Caco-2 (cell line): ENCODE measurements at regions of chr20 and their contacts with region 1.

Region 1: DNA sequence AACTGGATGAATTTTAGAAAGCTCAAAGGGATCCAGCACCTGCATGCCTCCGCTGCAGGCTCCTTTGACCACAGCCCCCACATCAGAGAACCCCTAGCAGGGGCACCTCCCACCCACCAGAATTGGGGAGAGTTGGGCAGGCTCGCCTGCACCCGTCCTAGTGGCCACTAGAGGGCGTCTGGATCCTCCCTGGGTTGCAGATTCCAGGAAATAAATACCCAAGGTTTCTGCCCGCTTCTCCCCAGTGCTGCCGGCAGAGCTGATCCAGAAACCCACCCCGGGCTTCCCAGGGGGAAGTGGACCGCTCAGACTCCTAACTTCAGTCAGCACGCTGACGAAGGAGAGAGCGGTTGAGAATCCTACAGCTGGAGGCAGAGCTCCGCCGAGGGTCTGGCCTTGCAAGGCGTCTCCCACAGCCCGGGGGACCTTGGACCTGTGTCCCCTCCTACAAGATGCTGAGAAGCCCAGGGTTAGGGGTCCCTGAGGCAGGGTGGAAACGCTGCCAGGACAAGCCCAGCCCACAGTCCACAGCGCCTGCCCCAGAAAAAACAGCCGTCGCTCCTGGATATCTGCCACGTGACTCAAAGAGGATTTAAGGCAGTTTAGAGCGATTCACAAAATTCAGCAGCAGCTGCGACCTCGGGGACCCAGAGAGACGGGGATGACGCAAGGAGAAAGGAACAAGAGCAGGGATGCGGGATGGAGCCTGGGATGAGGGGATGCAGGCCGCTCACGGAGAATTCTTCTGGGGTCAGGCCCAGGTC is 32.6 kb upstream of the PHACTR3 start:
- DNase-seq: peak; percentile 82 to 88
- H3K4me3 ChIP-seq: no peak overlapping the region; the same call in 1 of the 2 replicates
- H3K4me3 Mint-ChIP-seq: no peak overlapping the region
- H3K27ac Mint-ChIP-seq: no peak overlapping the region
- H3K4me1 ChIP-seq: no peaks in the 10 kb centered on the region
- H3K4me1 Mint-ChIP-seq: no peaks in the 10 kb centered on the region
- H3K27me3 ChIP-seq: no peaks in the 10 kb centered on the region
- H3K27me3 Mint-ChIP-seq: peaks cover 12% of the 10 kb centered on the region
- CTCF ChIP-seq: peak; percentile 100

Region 2: GRCh38 chr20:59560588-59561227 is 11.0 kb before region 1 on chr20:
- CTCF ChIA-PET with region 1: interaction called, 10 read pairs
- POLR2A ChIA-PET with region 1: no interaction called
- intact Hi-C with region 1: no loop called
- DNase-seq: peak in 1 of 2 experiments; percentile 62
- H3K4me3 ChIP-seq: no peak overlapping the region
- H3K4me3 Mint-ChIP-seq: no peak overlapping the region
- H3K27ac Mint-ChIP-seq: no peak overlapping the region
- H3K4me1 ChIP-seq: no peaks in the 10 kb centered on the region
- H3K4me1 Mint-ChIP-seq: no peaks in the 10 kb centered on the region
- H3K27me3 ChIP-seq: no peaks in the 10 kb centered on the region; the same call in 1 of the 2 replicates
- H3K27me3 Mint-ChIP-seq: peaks cover 19% of the 10 kb centered on the region
- CTCF ChIP-seq: peak; percentile 80 to 96

Region 3: GRCh38 chr20:59605165-59606042 is 33.7 kb after region 1 on chr20:
- CTCF ChIA-PET with region 1: no interaction called
- POLR2A ChIA-PET with region 1: no interaction called
- intact Hi-C with region 1: no loop called
- DNase-seq: no peak
- H3K4me3 ChIP-seq: no peak overlapping the region
- H3K4me3 Mint-ChIP-seq: no peak overlapping the region
- H3K27ac Mint-ChIP-seq: no peak overlapping the region
- H3K4me1 ChIP-seq: no peaks in the 10 kb centered on the region
- H3K4me1 Mint-ChIP-seq: no peaks in the 10 kb centered on the region
- H3K27me3 ChIP-seq: peaks cover 8% of the 10 kb centered on the region
- H3K27me3 Mint-ChIP-seq: peaks cover 49% of the 10 kb centered on the region
- CTCF ChIP-seq: no peak

Region 4: GRCh38 chr20:59751056-59751688 is 179.4 kb after region 1 on chr20:
- CTCF ChIA-PET with region 1: no interaction called
- POLR2A ChIA-PET with region 1: no interaction called
- intact Hi-C with region 1: loop called (anchors 1 kb)
- DNase-seq: peak; percentile 85 to 92
- H3K4me3 ChIP-seq: no peak overlapping the region
- H3K4me3 Mint-ChIP-seq: no peak overlapping the region
- H3K27ac Mint-ChIP-seq: no peak overlapping the region
- H3K4me1 ChIP-seq: no peaks in the 10 kb centered on the region
- H3K4me1 Mint-ChIP-seq: no peaks in the 10 kb centered on the region
- H3K27me3 ChIP-seq: peaks cover 10% of the 10 kb centered on the region
- H3K27me3 Mint-ChIP-seq: peaks cover 70% of the 10 kb centered on the region
- CTCF ChIP-seq: peak; percentile 99 to 100

Region 5: DNA sequence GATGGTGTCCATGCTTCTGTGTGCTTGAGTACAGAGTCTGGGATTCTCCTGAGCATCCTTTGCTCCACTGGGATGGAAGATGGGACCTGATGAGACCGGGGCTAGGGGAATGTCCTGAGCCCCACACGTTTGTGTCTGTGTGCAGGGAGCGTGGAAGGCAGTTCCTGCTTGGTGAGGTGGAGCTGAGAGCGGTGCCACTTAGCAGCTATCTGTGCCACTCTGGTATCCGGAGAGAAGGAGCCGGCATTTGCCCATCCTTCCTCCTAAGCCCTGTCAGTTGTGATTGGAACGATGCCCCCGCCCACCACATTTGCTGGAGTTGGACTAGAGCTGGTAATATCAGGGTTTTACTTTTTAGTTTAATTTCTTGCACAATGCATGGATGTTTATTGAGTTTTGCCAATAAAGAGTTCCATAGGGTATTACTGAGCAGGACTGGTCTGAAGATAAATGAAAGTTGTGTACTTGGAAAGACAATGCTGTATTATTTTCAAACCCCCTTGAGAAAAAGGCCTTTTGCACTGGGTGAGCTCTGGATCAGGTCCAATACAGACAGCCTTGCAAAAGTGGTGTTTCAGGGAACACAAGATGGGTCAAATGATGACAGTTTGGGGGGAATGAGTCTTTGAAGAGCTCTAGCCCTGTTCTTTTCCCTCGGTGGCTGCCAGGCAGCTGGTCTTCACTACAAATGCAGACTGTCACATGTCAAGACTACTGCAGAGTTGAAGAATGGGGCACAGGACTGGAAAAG is 230.9 kb after region 1 on chr20:
- CTCF ChIA-PET with region 1: no interaction called
- POLR2A ChIA-PET with region 1: no interaction called
- intact Hi-C with region 1: no loop called
- DNase-seq: peak in 1 of 2 experiments; percentile 34
- H3K4me3 ChIP-seq: no peak overlapping the region
- H3K4me3 Mint-ChIP-seq: no peak overlapping the region
- H3K27ac Mint-ChIP-seq: no peak overlapping the region
- H3K4me1 ChIP-seq: peaks cover 11% of the 10 kb centered on the region
- H3K4me1 Mint-ChIP-seq: peaks cover 10% of the 10 kb centered on the region
- H3K27me3 ChIP-seq: no peaks in the 10 kb centered on the region
- H3K27me3 Mint-ChIP-seq: peaks cover 2% of the 10 kb centered on the region
- CTCF ChIP-seq: no peak